Panc1 (cell line): ENCODE measurements at regions of chr9 and their contacts with region 1.

Region 1: GRCh38 chr9:98410185-98410697 is 154.8 kb upstream of the TBC1D2 start:
- DNase-seq: no peak
- ATAC-seq: no peak
- H3K4me3 ChIP-seq: no peak overlapping the region
- H3K27ac ChIP-seq: no peak overlapping the region
- H3K4me1 ChIP-seq: no peaks in the 10 kb centered on the region
- H3K27me3 ChIP-seq: no peaks in the 10 kb centered on the region
- CTCF ChIP-seq: no peak

Region 2: GRCh38 chr9:97820373-97820772 is 589.9 kb before region 1 on chr9:
- CTCF ChIA-PET with region 1: no interaction called
- POLR2A ChIA-PET with region 1: no interaction called
- in situ Hi-C with region 1: no loop called
- intact Hi-C with region 1: no loop called
- DNase-seq: no peak
- ATAC-seq: no peak
- H3K4me3 ChIP-seq: no peak overlapping the region
- H3K27ac ChIP-seq: no peak overlapping the region
- H3K4me1 ChIP-seq: no peaks in the 10 kb centered on the region
- H3K27me3 ChIP-seq: no peaks in the 10 kb centered on the region
- CTCF ChIP-seq: no peak

Region 3: GRCh38 chr9:98873951-98874371 is 463.7 kb after region 1 on chr9:
- CTCF ChIA-PET with region 1: interaction called, 10 read pairs
- POLR2A ChIA-PET with region 1: no interaction called
- in situ Hi-C with region 1: no loop called
- intact Hi-C with region 1: no loop called
- DNase-seq: no peak
- ATAC-seq: no peak
- H3K4me3 ChIP-seq: no peak overlapping the region
- H3K27ac ChIP-seq: no peak overlapping the region
- H3K4me1 ChIP-seq: no peaks in the 10 kb centered on the region
- H3K27me3 ChIP-seq: no peaks in the 10 kb centered on the region
- CTCF ChIP-seq: no peak